AG04449 (cell line): ENCODE measurements at regions of chr1 and their contacts with region 1.

Region 1: GRCh38 chr1:9778905-9779304 is 44.9 kb downstream of the CLSTN1 start:
- DNase-seq: no peak
- H3K4me3 ChIP-seq: no peak overlapping the region
- CTCF ChIP-seq: no peak

Region 2: GRCh38 chr1:9766759-9767442 is 12.0 kb before region 1 on chr1:
- CTCF ChIA-PET with region 1: interaction called, 13 read pairs
- POLR2A ChIA-PET with region 1: interaction called, 3 read pairs
- DNase-seq: peak; percentile 100
- H3K4me3 ChIP-seq: no peak overlapping the region
- CTCF ChIP-seq: no peak